Vagina (tissue), 2 donors: ENCODE measurements at regions of chr2 and their contacts with region 1.

Region 1: DNA sequence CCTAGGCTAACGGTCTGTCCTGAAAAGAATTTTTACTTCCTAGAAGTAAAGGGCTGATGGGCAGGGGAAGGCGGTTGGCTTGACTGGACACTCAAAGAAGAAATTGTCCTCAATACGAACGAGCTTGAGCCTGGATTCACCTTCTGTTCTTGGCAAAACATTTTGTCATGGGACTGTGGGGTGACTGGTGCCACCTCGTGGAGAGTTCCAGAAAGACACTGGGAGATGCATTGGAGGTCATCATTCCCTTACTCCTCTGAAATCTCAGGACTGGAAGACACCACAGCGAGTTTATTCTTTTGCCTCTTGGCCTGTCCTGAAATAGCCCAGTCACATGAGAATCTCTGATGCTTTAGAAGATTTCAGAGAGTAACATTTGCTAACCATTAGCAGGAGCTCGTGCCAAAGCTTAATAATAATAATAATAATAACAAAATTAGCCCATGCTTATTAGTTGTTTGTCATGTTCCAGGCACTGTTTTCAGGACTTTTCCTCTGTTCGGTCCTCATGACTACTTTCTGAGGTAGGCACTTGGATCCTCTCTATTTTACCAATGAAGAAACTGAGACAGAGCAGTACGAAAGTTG is 44.5 kb downstream of the TMEM182 start:
- DNase-seq: no peak
- H3K4me3 ChIP-seq: no peak overlapping the region
- H3K27ac ChIP-seq: no peak overlapping the region
- H3K4me1 ChIP-seq: no peaks in the 10 kb centered on the region
- H3K27me3 ChIP-seq: no peaks in the 10 kb centered on the region
- CTCF ChIP-seq: peak; percentile 10 to 58 (median 43)
- POLR2A ChIP-seq: no peak

Region 2: DNA sequence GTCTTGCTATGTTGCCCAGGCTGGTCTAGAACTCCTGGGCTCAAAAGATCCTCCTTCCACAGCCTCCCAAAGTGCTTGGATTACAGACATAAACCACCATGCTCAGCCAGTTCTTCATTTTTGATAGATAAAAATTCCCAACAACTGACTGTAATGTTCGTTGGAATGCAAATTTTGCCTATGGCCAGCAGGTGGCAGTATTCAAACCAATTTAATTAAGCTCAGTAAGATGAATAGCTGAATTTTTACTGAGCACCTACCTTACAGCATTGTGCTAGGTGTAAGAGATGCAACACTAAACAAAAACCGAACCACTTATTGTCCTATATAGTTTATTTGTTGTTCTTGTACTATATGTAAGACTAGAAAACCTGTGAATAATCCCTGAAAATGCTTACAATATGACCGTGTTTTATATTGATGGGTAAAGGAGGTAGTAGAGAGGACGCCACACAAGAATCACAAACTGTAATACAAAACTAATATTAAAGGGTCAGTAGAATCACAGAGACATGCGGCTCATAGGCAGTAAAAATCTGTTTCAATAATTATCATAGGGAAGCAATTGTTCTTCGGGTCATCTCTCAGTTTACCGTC is 52.7 kb before region 1 on chr2:
- intact Hi-C with region 1: loop called (anchors 5 kb)
- DNase-seq: no peak
- H3K4me3 ChIP-seq: no peak overlapping the region
- H3K27ac ChIP-seq: no peak overlapping the region
- H3K4me1 ChIP-seq: peaks cover 14% of the 10 kb centered on the region
- H3K27me3 ChIP-seq: no peaks in the 10 kb centered on the region
- CTCF ChIP-seq: peak in 2 of 3 experiments; percentile 38 to 81
- POLR2A ChIP-seq: no peak